GM10248 (cell line): ENCODE measurements at regions of chr1 and their contacts with region 1.

Region 1: DNA sequence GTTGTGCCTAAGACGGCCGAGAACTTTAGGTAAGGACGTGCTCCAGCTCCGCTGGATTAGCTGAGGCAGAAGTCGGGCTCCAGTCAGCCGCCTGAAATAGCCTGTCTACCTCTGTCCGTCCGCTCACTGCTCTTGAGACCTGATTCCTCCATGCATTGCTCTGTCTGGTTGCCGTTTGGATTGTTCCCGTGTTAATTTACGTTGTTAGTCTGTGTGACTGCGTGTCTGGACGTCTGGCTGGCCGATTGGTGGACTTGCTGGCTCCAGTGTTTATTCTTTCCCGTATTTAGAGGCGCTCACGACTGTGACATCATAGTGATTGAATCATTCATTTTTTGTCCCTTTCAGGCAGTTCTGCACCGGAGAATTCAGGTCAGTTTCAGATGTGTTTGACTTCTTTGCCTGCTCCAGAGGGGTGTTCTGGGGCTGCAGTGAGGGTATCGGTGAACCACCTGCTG is 686 bp downstream of the PPIH start:
- DNase-seq: no peak
- CTCF ChIP-seq: no peak

Region 2: GRCh38 chr1:42646056-42646455 is 12.9 kb before region 1 on chr1:
- CTCF ChIA-PET with region 1: no interaction called
- POLR2A ChIA-PET with region 1: no interaction called
- DNase-seq: no peak
- CTCF ChIP-seq: no peak

Region 3: DNA sequence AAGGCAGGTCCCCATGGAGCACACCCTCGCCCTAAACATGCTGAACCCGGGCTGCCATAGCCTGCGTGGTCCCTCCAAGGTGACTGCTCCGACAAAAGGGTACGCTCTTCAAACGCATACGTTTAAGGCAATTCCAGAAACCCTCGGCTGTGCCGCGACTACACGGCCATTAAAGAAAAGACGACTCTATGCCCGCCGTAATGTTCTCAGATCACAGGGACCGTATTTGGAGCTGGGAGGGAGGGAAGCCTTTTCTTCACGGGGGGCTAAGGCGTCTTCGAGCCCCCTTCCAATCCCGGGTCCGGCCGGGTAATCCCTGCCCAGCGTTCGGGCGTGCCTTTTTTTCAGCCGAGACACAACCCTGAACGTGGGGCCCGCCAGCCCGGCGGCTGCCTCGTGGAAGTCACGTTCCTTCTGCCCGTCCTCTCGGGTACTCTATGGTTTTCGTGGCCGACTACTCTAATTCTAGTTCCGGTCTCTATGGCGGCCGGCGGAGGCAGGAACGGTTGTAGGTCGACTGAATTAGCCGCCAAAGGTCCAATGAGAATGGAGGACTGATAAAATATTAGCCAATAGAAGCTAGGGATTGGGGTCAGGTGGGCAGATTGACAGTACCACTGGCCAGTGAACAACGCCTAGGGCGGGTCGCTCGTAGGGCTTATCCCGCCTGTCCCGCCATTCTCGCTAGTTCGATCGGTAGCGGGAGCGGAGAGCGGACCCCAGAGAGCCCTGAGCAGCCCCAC is 23.0 kb after region 1 on chr1 and contains the start of gene YBX1:
- CTCF ChIA-PET with region 1: interaction called, 12 read pairs
- POLR2A ChIA-PET with region 1: interaction called, 13 read pairs
- DNase-seq: peak; percentile 99
- CTCF ChIP-seq: no peak